GM10248 (cell line): ENCODE measurements at regions of chr11 and their contacts with region 1.

Region 1: DNA sequence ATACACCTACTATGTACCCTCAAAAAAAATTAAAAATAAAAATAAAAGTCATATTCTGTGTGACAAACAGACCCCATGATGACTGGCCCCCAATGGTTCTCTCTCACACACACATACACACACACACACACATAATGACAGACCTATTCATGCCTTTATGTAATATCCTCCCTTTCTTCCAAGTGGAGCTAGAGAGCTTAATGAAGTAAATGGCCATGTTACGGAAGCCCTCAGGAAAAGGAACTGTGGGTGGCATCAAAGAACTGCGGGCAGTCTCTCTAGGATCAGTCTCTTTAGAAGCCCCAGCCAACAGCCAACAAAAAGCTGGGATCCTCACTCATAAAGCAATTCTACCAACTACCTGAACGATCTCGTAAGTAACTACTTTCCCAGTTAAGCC is 125.5 kb downstream of the SIK3 start:
- DNase-seq: no peak
- CTCF ChIP-seq: no peak

Region 2: DNA sequence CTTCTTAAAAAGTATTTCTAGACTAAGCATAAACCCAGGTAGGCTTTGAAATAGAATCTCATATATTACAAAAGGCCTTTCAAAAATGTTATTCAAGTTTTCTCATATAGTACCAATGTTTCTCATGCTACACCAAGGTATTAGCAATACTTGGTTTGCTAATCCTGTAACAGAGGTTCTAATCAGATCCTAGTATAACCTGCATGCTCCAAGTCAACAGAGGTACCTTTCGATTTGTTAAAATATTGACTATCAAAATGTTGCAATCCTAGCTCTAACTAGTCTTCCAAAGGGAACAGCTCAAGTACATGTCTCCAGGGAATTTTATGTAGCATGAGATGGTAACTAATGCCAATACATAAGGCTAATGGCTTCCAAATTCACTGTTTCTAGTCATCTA is 37.2 kb before region 1 on chr11:
- CTCF ChIA-PET with region 1: interaction called, 3 read pairs
- POLR2A ChIA-PET with region 1: interaction called, 10 read pairs
- DNase-seq: no peak
- CTCF ChIP-seq: no peak

Region 3: GRCh38 chr11:116958246-116958645 is 14.4 kb before region 1 on chr11:
- CTCF ChIA-PET with region 1: interaction called, 12 read pairs
- POLR2A ChIA-PET with region 1: no interaction called
- DNase-seq: no peak
- CTCF ChIP-seq: no peak